Astrocyte of the cerebellum (primary cell): ENCODE measurements at regions of chr7 and their contacts with region 1.

Region 1: GRCh38 chr7:150799741-150800580 is at the start of gene TMEM176B:
- DNase-seq: no peak
- H3K4me3 ChIP-seq: no peak within 1 kb of the TSS
- CTCF ChIP-seq: no peak

Region 2: DNA sequence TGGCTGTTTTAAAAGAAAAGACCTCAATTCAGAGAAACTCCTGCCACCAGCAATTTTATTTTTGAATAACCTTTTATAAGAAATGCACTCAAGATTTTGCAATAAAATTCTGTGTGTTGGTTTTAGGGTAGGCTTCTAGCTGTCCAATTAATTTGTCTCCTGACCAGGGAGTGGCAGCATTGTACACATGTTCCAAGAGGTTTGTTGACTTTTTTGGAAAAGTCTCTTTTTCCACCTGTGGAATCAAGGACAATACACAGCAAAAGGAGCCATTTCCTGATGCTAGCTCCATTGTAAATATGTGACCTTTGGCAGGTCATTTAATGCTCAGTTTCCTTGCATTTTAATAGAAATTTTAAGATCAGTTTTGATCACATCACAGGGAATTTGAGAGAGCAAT is 60.9 kb before region 1 on chr7:
- in situ Hi-C with region 1: no loop called
- DNase-seq: no peak
- H3K4me3 ChIP-seq: no peak overlapping the region
- CTCF ChIP-seq: no peak

Region 3: DNA sequence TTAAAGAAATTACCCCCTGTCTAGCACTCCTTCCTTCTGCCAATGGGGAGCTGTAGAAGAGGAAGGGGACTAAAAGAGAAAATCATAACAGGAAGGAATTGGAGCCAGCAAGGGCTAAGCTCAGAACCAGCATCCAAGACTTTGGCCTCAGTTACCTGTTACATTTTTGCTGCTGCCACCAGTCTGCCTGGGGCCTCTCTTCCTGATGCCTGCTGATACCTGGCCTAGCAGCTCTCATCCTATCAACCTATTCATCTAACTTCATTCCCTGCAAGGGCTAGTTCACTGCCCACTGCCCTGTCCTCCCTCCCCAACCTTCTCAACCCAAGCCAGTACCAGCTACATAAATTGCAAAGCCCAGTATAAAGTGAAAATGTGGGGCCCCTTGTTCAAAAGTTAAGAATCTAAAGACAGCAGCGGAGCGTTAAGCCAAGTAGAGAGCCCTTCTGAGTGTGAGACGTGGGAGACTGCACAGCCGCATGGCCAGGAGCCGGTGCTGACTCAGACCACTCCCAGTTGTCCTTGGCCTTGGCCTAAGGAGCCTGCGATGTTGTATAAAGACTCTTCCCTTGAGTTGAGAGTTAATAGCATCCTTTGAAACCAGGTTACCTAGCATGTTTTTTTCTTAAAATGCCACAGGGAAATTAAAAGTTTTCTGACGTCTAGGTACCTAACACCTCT is 39.1 kb after region 1 on chr7:
- in situ Hi-C with region 1: loop called (anchors 5 kb)
- DNase-seq: no peak
- H3K4me3 ChIP-seq: no peak overlapping the region
- CTCF ChIP-seq: no peak

Region 4: DNA sequence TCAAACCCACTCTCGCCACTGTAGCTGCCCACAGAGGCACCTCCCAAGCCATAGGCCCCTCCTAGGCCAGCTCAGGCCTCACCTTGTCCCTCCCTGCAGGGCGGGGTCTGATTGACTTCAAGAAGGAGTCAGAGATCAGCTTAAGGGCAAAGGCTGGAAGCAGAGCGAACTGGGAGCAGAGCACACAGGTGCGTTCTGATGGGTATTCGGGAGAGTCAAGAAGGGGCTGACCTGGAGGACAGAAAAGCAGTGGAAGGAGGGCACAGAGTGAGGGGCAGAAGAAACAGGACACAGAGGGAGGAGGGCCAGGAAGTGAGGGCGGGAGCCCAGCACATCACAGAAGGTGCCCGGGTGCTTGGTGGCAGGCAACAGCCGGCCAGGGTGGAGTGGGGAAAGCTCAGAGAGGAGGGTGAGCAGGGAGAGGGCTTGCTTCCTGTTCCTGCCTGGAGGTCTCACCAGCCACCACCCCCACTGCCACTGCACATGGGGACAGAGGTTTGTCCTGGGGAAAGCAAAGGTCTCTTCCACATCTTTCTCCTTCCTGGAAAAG is 52.5 kb after region 1 on chr7 and contains the start of gene AOC1:
- in situ Hi-C with region 1: no loop called
- DNase-seq: no peak
- H3K4me3 ChIP-seq: no peak within 1 kb of the TSS
- CTCF ChIP-seq: no peak

Region 5: GRCh38 chr7:150941981-150942590 is 142.1 kb after region 1 on chr7:
- in situ Hi-C with region 1: no loop called
- DNase-seq: no peak
- H3K4me3 ChIP-seq: no peak overlapping the region
- CTCF ChIP-seq: no peak